Ascending aorta (tissue), 2 donors: ENCODE measurements at regions of chr14 and their contacts with region 1.

Region 1: GRCh38 chr14:73728717-73729330 is 14.6 kb upstream of the PNMA1 start:
- DNase-seq: peak in 1 of 2 donors; percentile 91
- H3K4me3 ChIP-seq: no peak overlapping the region
- H3K27ac ChIP-seq: peak overlapping the region; percentile 48 to 54
- H3K4me1 ChIP-seq: peaks cover 8 to 30% of the 10 kb centered on the region in 2 donors
- H3K27me3 ChIP-seq: no peaks in the 10 kb centered on the region
- CTCF ChIP-seq: peak; percentile 82 to 95 (median 91)

Region 2: GRCh38 chr14:73753959-73754882 is 25.4 kb after region 1 on chr14:
- intact Hi-C with region 1: loop called (anchors 2 kb)
- DNase-seq: no peak
- H3K4me3 ChIP-seq: peak overlapping the region; percentile 24 to 50
- H3K27ac ChIP-seq: peak overlapping the region; percentile 98 to 99
- H3K4me1 ChIP-seq: peaks cover 60 to 98% of the 10 kb centered on the region in 2 donors
- H3K27me3 ChIP-seq: no peaks in the 10 kb centered on the region
- CTCF ChIP-seq: no peak

Region 3: GRCh38 chr14:73795972-73796371 is 67.1 kb after region 1 on chr14:
- intact Hi-C with region 1: loop called (anchors 2 kb)
- DNase-seq: no peak
- H3K4me3 ChIP-seq: no peak overlapping the region
- H3K27ac ChIP-seq: no peak overlapping the region
- H3K4me1 ChIP-seq: peaks cover 3 to 12% of the 10 kb centered on the region in 2 donors
- H3K27me3 ChIP-seq: no peaks in the 10 kb centered on the region
- CTCF ChIP-seq: no peak

Region 4: GRCh38 chr14:73851644-73852382 is 123.0 kb after region 1 on chr14 and contains the start of gene PTGR2:
- intact Hi-C with region 1: loop called (anchors 1 kb)
- DNase-seq: peak; percentile 84 to 98
- H3K4me3 ChIP-seq: peak within 1 kb of the TSS; percentile 59 to 62
- H3K27ac ChIP-seq: peak within 1 kb of the TSS; percentile 80 to 86
- H3K4me1 ChIP-seq: peaks cover 0 to 7% of the 10 kb centered on the region in 2 donors
- H3K27me3 ChIP-seq: no peaks in the 10 kb centered on the region
- CTCF ChIP-seq: peak in 2 of 3 experiments; percentile 9 to 26
- total RNA-seq, gene PTGR2: 2.3 TPM

Region 5: DNA sequence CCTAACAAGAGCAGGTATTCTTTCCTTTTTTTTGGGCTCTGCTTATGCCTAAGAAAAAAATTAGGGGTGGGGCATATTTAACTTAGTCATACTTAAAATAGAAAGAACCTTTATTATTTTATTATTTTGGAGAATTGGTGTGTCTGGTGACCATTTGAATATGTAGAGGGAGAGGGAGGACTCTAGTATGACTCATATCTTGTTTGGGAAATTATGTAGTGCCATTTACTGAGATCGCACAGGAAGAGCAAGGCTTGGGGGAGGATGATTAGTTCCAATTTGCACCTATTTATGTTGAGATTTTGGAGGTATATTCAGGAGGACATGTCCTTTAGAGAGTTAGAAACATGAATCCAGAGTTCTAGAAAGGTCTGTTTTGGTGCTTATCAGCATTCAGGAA is 167.7 kb after region 1 on chr14:
- intact Hi-C with region 1: no loop called
- DNase-seq: no peak
- H3K4me3 ChIP-seq: no peak overlapping the region
- H3K27ac ChIP-seq: peak overlapping the region in 1 of 2 donors; percentile 28
- H3K4me1 ChIP-seq: no peaks in the 10 kb centered on the region
- H3K27me3 ChIP-seq: no peaks in the 10 kb centered on the region
- CTCF ChIP-seq: no peak

Region 6: GRCh38 chr14:73949744-73950734 is 221.2 kb after region 1 on chr14 and contains the starts of genes COQ6 and FAM161B:
- intact Hi-C with region 1: loop called (anchors 5 kb)
- DNase-seq: peak; percentile 79 to 97
- H3K4me3 ChIP-seq: peak within 1 kb of the TSS; percentile 78 to 85
- H3K27ac ChIP-seq: peak within 1 kb of the TSS; percentile 88 to 95
- H3K4me1 ChIP-seq: peaks cover 0 to 12% of the 10 kb centered on the region in 2 donors
- H3K27me3 ChIP-seq: no peaks in the 10 kb centered on the region
- CTCF ChIP-seq: peak in 2 of 3 experiments; percentile 7 to 19
- total RNA-seq, gene COQ6: 6.7 TPM
- total RNA-seq, gene FAM161B: 0.53 TPM